Caco-2 (cell line): ENCODE measurements at regions of chr5 and their contacts with region 1.

Region 1: GRCh38 chr5:35089334-35090314 is 41.9 kb upstream of the AGXT2 start:
- DNase-seq: peak; percentile 60 to 76
- H3K4me3 ChIP-seq: no peak overlapping the region
- H3K4me3 Mint-ChIP-seq: no peak overlapping the region
- H3K27ac Mint-ChIP-seq: no peak overlapping the region
- H3K4me1 ChIP-seq: no peaks in the 10 kb centered on the region
- H3K4me1 Mint-ChIP-seq: no peaks in the 10 kb centered on the region
- H3K27me3 ChIP-seq: 0 out of 2 replicates have a peak, but pooled peaks cover 1% of the 10 kb centered on the region
- H3K27me3 Mint-ChIP-seq: peaks cover 2% of the 10 kb centered on the region
- CTCF ChIP-seq: peak; percentile 83 to 86

Region 2: GRCh38 chr5:35159370-35159742 is 69.7 kb after region 1 on chr5:
- CTCF ChIA-PET with region 1: no interaction called
- POLR2A ChIA-PET with region 1: no interaction called
- intact Hi-C with region 1: loop called (anchors 1 kb)
- DNase-seq: peak; percentile 54 to 61
- H3K4me3 ChIP-seq: no peak overlapping the region
- H3K4me3 Mint-ChIP-seq: no peak overlapping the region
- H3K27ac Mint-ChIP-seq: no peak overlapping the region
- H3K4me1 ChIP-seq: peaks cover 17% of the 10 kb centered on the region
- H3K4me1 Mint-ChIP-seq: peaks cover 15% of the 10 kb centered on the region
- H3K27me3 ChIP-seq: no peaks in the 10 kb centered on the region
- H3K27me3 Mint-ChIP-seq: no peaks in the 10 kb centered on the region
- CTCF ChIP-seq: no peak

Region 3: GRCh38 chr5:35182541-35183535 is 93.2 kb after region 1 on chr5:
- CTCF ChIA-PET with region 1: no interaction called
- POLR2A ChIA-PET with region 1: no interaction called
- intact Hi-C with region 1: loop called (anchors 1 kb)
- DNase-seq: peak; percentile 62 to 67
- H3K4me3 ChIP-seq: no peak overlapping the region
- H3K4me3 Mint-ChIP-seq: no peak overlapping the region
- H3K27ac Mint-ChIP-seq: no peak overlapping the region
- H3K4me1 ChIP-seq: peaks cover 6% of the 10 kb centered on the region; the same call in 1 of the 2 replicates
- H3K4me1 Mint-ChIP-seq: peaks cover 6% of the 10 kb centered on the region
- H3K27me3 ChIP-seq: no peaks in the 10 kb centered on the region
- H3K27me3 Mint-ChIP-seq: no peaks in the 10 kb centered on the region
- CTCF ChIP-seq: peak; percentile 40 to 71

Region 4: DNA sequence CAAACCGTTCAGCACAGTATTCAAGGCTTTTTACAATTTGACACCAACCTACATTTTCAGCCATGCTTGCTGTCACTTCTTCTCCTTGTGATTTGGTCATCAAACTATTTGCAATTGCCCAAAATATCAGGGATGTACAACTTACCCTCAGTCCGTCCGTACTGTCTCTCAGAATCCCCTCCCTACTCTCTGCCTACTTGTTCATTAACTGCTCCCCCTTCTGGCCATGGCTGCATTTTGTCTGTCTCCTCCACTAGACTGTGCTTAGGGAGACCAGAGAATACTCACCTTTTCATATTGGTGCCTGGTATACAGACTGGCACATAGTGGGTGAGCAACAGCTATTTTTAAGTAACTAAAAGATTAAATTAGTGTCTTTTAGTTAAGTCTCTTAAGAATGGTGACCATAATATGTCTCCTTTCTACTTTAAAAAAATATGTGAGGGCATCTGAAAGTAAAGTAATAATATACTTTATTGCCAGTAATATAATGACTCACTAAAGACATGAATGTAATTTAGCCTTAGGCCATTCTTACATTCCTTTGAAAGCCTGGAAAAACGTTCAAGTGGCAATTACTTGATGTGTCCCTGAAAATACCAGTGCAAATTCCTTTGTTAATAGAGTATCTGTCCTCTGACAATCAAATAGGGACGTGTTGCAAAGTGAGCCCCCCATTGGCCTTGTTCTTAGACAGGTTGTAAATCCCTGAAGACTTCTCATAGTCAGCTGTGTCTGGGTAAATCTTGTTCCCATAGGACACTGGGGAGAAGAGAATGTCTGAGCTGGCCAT is 112.9 kb after region 1 on chr5:
- CTCF ChIA-PET with region 1: no interaction called
- POLR2A ChIA-PET with region 1: no interaction called
- intact Hi-C with region 1: loop called (anchors 1 kb)
- DNase-seq: peak; percentile 70 to 74
- H3K4me3 ChIP-seq: no peak overlapping the region
- H3K4me3 Mint-ChIP-seq: no peak overlapping the region
- H3K27ac Mint-ChIP-seq: no peak overlapping the region
- H3K4me1 ChIP-seq: no peaks in the 10 kb centered on the region
- H3K4me1 Mint-ChIP-seq: no peaks in the 10 kb centered on the region
- H3K27me3 ChIP-seq: no peaks in the 10 kb centered on the region
- H3K27me3 Mint-ChIP-seq: peaks cover 2% of the 10 kb centered on the region
- CTCF ChIP-seq: peak; percentile 68 to 70

Region 5: DNA sequence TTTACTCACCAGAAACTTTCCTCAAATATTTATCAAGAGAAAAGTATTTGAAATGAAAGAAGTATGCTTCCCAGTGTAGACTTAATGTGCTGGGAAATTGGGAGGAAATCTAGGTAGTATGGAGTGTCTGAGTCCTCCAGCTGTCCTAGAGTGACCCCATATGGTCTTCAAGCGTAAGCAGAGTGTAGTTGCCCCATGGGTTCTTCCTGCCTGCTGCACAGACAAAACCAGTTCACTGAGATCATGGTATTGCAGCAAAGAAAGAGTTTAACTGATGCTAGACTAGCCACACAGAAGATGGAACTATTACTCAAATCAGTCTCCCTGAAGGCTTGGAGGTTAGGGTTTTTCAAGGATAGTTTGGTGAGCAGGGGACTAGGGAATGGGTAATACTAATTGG is 255.6 kb after region 1 on chr5:
- CTCF ChIA-PET with region 1: no interaction called
- POLR2A ChIA-PET with region 1: no interaction called
- intact Hi-C with region 1: loop called (anchors 1 kb)
- DNase-seq: peak in 1 of 2 experiments; percentile 17
- H3K4me3 ChIP-seq: no peak overlapping the region
- H3K4me3 Mint-ChIP-seq: no peak overlapping the region
- H3K27ac Mint-ChIP-seq: no peak overlapping the region
- H3K4me1 ChIP-seq: no peaks in the 10 kb centered on the region
- H3K4me1 Mint-ChIP-seq: no peaks in the 10 kb centered on the region
- H3K27me3 ChIP-seq: no peaks in the 10 kb centered on the region
- H3K27me3 Mint-ChIP-seq: no peaks in the 10 kb centered on the region
- CTCF ChIP-seq: peak in 1 of 2 experiments; percentile 22

Region 6: DNA sequence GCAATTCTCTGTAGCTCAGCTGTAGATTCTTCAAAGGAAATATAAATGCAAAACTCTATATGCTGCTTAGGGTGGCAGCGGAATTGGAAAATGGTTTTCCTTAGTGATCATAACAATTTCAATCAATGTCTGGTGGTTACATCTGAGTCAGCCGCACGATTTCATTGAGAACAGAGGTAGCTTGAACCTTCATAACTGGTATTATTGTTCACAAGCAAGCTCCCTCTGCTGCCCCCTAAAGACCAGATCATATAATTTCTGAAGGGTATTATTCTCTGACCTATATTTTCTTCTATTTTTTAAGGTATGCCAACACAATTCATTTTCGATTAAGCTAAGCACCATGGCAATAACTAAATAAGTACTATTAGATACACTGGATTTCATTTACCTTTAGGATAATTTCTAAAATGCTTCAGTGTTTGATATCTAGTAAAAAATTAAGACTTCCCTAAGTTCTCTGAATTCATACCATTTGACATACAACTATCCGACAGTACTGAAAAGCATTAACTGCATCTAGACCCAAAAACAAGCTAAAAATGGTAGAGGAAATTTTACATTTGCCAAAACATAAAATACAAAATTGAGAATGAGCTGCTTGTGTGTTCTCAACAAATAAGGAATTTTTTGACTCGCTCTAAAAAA is 346.9 kb after region 1 on chr5:
- CTCF ChIA-PET with region 1: no interaction called
- POLR2A ChIA-PET with region 1: no interaction called
- intact Hi-C with region 1: loop called (anchors 5 kb)
- DNase-seq: peak in 1 of 2 experiments; percentile 47
- H3K4me3 ChIP-seq: no peak overlapping the region
- H3K4me3 Mint-ChIP-seq: no peak overlapping the region
- H3K27ac Mint-ChIP-seq: no peak overlapping the region
- H3K4me1 ChIP-seq: no peaks in the 10 kb centered on the region
- H3K4me1 Mint-ChIP-seq: no peaks in the 10 kb centered on the region
- H3K27me3 ChIP-seq: no peaks in the 10 kb centered on the region
- H3K27me3 Mint-ChIP-seq: peaks cover 10% of the 10 kb centered on the region
- CTCF ChIP-seq: peak; percentile 43 to 48

Region 7: GRCh38 chr5:35598707-35599370 is 509.2 kb after region 1 on chr5:
- CTCF ChIA-PET with region 1: no interaction called
- POLR2A ChIA-PET with region 1: no interaction called
- intact Hi-C with region 1: loop called (anchors 5 kb)
- DNase-seq: peak in 1 of 2 experiments; percentile 8
- H3K4me3 ChIP-seq: no peak overlapping the region
- H3K4me3 Mint-ChIP-seq: no peak overlapping the region
- H3K27ac Mint-ChIP-seq: no peak overlapping the region
- H3K4me1 ChIP-seq: no peaks in the 10 kb centered on the region
- H3K4me1 Mint-ChIP-seq: no peaks in the 10 kb centered on the region
- H3K27me3 ChIP-seq: no peaks in the 10 kb centered on the region
- H3K27me3 Mint-ChIP-seq: peaks cover 5% of the 10 kb centered on the region
- CTCF ChIP-seq: peak; percentile 13 to 24

Region 8: GRCh38 chr5:36695677-36696673 is 1606.4 kb after region 1 on chr5:
- CTCF ChIA-PET with region 1: no interaction called
- POLR2A ChIA-PET with region 1: no interaction called
- intact Hi-C with region 1: no loop called
- DNase-seq: peak; percentile 71 to 76
- H3K4me3 ChIP-seq: no peak overlapping the region
- H3K4me3 Mint-ChIP-seq: no peak overlapping the region
- H3K27ac Mint-ChIP-seq: no peak overlapping the region
- H3K4me1 ChIP-seq: peaks cover 24% of the 10 kb centered on the region
- H3K4me1 Mint-ChIP-seq: peaks cover 41% of the 10 kb centered on the region
- H3K27me3 ChIP-seq: no peaks in the 10 kb centered on the region
- H3K27me3 Mint-ChIP-seq: no peaks in the 10 kb centered on the region
- CTCF ChIP-seq: peak; percentile 84 to 92